ENCODE measurements at regions of chr2 and their contacts with region 1.

Region 1: GRCh38 chr2:3644891-3645605 is 13.0 kb upstream of the ALLC start:
- DNase-seq: no peak
- H3K4me3 ChIP-seq: no peak overlapping the region
- H3K4me3 Mint-ChIP-seq: no peak overlapping the region
- H3K27ac Mint-ChIP-seq: peak overlapping the region; percentile 62
- H3K4me1 ChIP-seq: peaks cover 18% of the 10 kb centered on the region
- H3K4me1 Mint-ChIP-seq: peaks cover 21% of the 10 kb centered on the region
- H3K27me3 ChIP-seq: no peaks in the 10 kb centered on the region
- H3K27me3 Mint-ChIP-seq: no peaks in the 10 kb centered on the region
- CTCF ChIP-seq: no peak

Region 2: DNA sequence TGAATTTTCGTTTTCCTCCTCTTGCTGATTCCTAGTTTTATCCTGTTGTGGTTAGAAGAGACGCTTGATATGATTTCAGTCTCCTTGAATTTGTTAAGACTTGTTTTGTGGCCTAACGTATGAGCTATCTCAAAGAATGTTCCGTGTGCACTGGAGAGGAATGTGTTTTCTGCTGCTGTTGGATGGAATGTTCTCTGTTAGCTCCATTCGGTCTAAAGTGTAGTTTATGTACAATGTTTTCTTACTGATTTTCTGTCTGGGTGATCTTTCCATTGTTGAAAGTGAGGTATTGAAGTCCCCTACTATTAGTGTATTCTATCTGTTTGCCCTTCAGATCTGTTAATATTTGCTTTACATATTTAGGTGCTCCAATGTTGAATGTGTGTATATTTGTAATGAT is 24.2 kb before region 1 on chr2:
- CTCF ChIA-PET with region 1: no interaction called
- POLR2A ChIA-PET with region 1: no interaction called
- intact Hi-C with region 1: loop called (anchors 1 kb)
- DNase-seq: no peak
- H3K4me3 ChIP-seq: no peak overlapping the region
- H3K4me3 Mint-ChIP-seq: no peak overlapping the region
- H3K27ac Mint-ChIP-seq: peak overlapping the region; percentile 10
- H3K4me1 ChIP-seq: no peaks in the 10 kb centered on the region
- H3K4me1 Mint-ChIP-seq: peaks cover 14% of the 10 kb centered on the region
- H3K27me3 ChIP-seq: no peaks in the 10 kb centered on the region; the same call in 1 of the 2 replicates
- H3K27me3 Mint-ChIP-seq: peaks cover 2% of the 10 kb centered on the region
- CTCF ChIP-seq: no peak

Region 3: DNA sequence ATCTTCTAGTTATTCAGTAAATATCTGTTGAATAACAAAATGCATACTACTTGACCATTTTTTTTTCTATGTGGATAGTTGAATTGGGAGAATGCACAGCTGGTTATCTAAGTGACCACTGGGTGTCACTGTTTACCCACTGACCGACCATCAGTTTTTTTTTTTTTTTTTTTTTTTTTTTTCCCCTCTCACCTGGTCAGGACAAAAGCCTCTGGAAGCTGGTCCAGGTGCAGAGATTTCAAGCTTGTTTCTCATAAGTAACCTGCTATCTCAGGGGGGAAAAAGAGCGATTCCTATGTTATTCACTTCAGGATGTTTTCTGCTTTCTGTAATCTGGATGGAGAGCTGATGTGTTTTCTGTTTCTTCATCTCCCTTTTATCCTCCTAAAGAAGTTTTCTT is 314.3 kb after region 1 on chr2:
- CTCF ChIA-PET with region 1: no interaction called
- POLR2A ChIA-PET with region 1: no interaction called
- intact Hi-C with region 1: no loop called
- DNase-seq: peak in 1 of 2 experiments; percentile 36
- H3K4me3 ChIP-seq: no peak overlapping the region
- H3K4me3 Mint-ChIP-seq: no peak overlapping the region
- H3K27ac Mint-ChIP-seq: no peak overlapping the region
- H3K4me1 ChIP-seq: no peaks in the 10 kb centered on the region
- H3K4me1 Mint-ChIP-seq: no peaks in the 10 kb centered on the region
- H3K27me3 ChIP-seq: no peaks in the 10 kb centered on the region
- H3K27me3 Mint-ChIP-seq: peaks cover 6% of the 10 kb centered on the region
- CTCF ChIP-seq: peak; percentile 69 to 86

Measured in Caco-2 (cell line).